CD4-positive, alpha-beta T cell (primary cell): ENCODE measurements at regions of chr17 and their contacts with region 1.

Region 1: DNA sequence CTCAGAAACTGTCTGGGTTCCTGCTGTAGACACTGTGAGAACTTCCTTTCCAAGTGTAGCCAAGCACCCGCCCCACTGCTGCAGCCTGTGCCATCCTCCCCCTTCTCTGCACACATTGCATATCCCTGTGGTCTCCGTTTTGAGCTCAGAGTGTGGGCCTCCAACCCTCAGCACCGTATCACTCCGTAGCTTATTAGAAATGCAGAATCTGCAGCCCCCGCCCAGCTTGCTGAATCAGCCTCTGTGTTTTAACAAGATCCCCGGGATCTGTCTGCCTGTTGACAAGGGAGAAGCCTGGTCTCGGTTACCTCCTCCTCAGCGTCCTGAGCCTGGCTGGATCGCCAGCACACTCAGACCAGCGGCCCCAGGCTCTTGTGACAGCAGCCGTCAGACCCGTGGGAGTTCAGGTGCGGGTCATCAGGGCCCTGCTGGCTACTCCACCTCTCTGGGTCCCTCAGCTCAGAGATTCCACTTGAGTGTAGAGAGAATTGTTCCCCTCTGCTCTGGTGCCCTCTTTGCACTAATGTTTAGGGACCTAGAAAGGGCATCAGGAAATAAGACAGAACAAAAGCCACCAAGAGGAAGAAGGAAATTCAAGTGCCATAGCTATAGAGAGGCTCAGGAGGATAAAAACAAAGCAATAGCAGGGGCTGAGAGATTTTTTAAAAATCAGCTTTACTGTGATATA is 92.3 kb downstream of the PITPNC1 start:
- DNase-seq: peak in 8 of 14 experiments; percentile 23 to 56 (median 44)
- ATAC-seq: peak; percentile 53
- H3K4me3 ChIP-seq: peak overlapping the region; percentile 16
- H3K4me3 Mint-ChIP-seq: peak overlapping the region; percentile 66
- H3K27ac ChIP-seq: peak overlapping the region; percentile 61 to 67
- H3K27ac Mint-ChIP-seq: peak overlapping the region; percentile 83
- H3K4me1 ChIP-seq: peaks cover 68% of the 10 kb centered on the region
- H3K4me1 Mint-ChIP-seq: peaks cover 71% of the 10 kb centered on the region
- H3K27me3 ChIP-seq: no peaks in the 10 kb centered on the region
- H3K27me3 Mint-ChIP-seq: no peaks in the 10 kb centered on the region
- CTCF ChIP-seq: no peak

Region 2: DNA sequence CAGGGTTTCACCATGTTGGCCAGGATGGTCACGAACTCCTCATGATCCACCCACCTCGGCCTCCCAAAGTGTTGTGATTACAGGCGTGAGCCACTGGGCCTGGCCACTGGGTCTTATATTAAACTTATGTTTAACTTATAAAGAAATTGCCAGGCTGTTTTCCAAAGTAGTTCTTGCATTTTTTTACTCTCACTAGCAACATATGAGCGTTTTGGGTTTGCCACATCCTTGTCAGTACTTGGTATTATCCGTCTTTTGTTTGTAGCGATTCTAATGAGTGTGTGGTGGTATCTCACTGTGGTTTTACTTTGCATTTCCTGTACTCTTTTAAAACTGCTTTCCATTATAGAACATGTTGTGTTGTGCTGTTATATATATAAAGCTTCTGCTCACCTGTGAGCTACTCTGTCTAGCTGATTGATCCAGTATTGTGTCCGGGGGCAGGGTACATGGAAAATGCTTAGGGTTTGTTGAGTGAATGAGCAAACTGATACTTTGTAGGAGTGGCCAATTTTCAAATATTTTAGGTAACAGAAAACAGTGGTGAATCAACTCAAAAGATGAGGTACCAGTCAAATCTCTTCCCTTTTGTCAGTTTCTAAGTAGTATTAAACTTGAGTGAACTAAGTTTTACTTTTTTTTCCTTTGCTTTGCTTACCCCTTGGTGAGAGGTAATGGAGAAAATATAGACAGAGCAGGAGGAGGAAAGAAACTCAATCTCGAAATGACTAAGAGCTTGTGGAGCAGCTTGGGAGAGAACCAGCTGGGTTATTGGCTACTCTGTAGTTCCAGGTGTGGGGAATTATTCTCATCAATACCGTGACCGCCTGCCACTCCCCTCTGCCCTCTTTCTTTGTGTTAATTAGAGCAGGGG is 16.4 kb before region 1 on chr17:
- CTCF ChIA-PET with region 1: interaction called, 21 read pairs
- POLR2A ChIA-PET with region 1: interaction called, 12 read pairs
- intact Hi-C with region 1: loop called in 1 of 2 experiments (anchors 2 kb)
- DNase-seq: peak in 3 of 14 experiments; percentile 74 to 91 (median 76)
- ATAC-seq: peak; percentile 90
- H3K4me3 ChIP-seq: peak overlapping the region; percentile 9
- H3K4me3 Mint-ChIP-seq: peak overlapping the region; percentile 85
- H3K27ac ChIP-seq: peak overlapping the region; percentile 20 to 71
- H3K27ac Mint-ChIP-seq: peak overlapping the region; percentile 91
- H3K4me1 ChIP-seq: peaks cover 81% of the 10 kb centered on the region
- H3K4me1 Mint-ChIP-seq: peaks cover 95% of the 10 kb centered on the region
- H3K27me3 ChIP-seq: no peaks in the 10 kb centered on the region
- H3K27me3 Mint-ChIP-seq: no peaks in the 10 kb centered on the region
- CTCF ChIP-seq: no peak